ENCODE measurements at regions of chr18 and their contacts with region 1.

Region 1: GRCh38 chr18:35060122-35060815 is 19.1 kb downstream of the MAPRE2 start:
- DNase-seq: no peak
- ATAC-seq: no peak
- H3K4me3 ChIP-seq: no peak overlapping the region
- H3K4me3 Mint-ChIP-seq: no peak overlapping the region
- H3K27ac ChIP-seq: no peak overlapping the region
- H3K27ac Mint-ChIP-seq: no peak overlapping the region
- H3K4me1 ChIP-seq: peaks cover 0 to 19% of the 10 kb centered on the region in 2 experiments
- H3K4me1 Mint-ChIP-seq: peaks cover 74 to 84% (median 79%) of the 10 kb centered on the region in 3 donors
- H3K27me3 ChIP-seq: no peaks in the 10 kb centered on the region
- H3K27me3 Mint-ChIP-seq: no peaks in the 10 kb centered on the region

Region 2: GRCh38 chr18:34933880-34934708 is 126.2 kb before region 1 on chr18:
- CTCF ChIA-PET with region 1: no interaction called
- POLR2A ChIA-PET with region 1: no interaction called
- DNase-seq: no peak
- ATAC-seq: no peak
- H3K4me3 ChIP-seq: no peak overlapping the region
- H3K4me3 Mint-ChIP-seq: no peak overlapping the region
- H3K27ac ChIP-seq: no peak overlapping the region
- H3K27ac Mint-ChIP-seq: no peak overlapping the region
- H3K4me1 ChIP-seq: no peaks in the 10 kb centered on the region
- H3K4me1 Mint-ChIP-seq: no peaks in the 10 kb centered on the region
- H3K27me3 ChIP-seq: peaks cover 0 to 2% of the 10 kb centered on the region in 2 experiments
- H3K27me3 Mint-ChIP-seq: peaks cover 3 to 11% of the 10 kb centered on the region in 2 donors

Region 3: DNA sequence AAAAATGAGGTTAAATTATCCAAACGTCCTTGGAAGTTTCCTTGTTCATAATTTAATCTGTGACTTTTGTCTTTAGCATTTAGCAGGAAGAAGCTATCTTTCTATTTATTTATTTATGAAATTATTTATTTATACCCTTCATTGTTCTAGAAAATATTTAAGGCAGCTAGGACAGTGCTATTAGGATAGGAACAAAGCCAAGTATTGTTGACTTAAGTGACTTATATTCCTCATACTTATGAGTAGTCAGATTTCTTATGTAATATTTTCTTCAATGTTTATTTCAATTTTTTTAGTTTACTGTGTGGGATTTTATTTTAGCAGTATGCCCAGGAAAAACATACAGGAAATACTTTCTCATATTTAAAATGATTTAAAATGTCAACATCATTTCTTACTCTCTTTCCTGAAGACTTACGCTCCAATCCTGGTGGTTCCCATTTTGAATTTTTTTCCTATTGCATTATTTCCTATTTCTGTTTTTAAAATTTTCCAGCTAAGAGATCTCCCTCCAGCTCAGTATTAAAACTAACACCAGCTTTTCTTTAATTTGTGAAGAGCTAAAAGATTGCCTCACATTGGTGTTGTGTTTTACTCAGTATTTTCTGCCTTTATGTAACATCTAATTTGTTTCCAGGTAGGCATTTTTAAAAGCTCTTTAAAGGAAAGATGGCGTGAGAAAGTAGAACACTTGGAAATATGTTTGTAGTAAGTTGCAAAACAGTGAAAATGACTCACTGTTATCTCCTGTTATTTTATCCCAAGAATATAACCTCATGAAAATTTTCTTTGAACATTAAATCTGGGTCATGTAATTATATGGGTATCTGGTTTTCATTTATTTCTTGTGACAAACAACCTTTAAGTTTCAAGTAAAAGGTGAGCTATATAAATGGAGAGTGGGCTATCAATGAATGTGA is 13.2 kb after region 1 on chr18:
- CTCF ChIA-PET with region 1: interaction called in 1 of 2 experiments, 3 read pairs
- POLR2A ChIA-PET with region 1: interaction called in 1 of 2 experiments, 15 read pairs
- DNase-seq: no peak
- ATAC-seq: no peak
- H3K4me3 ChIP-seq: no peak overlapping the region
- H3K4me3 Mint-ChIP-seq: no peak overlapping the region
- H3K27ac ChIP-seq: no peak overlapping the region
- H3K27ac Mint-ChIP-seq: no peak overlapping the region
- H3K4me1 ChIP-seq: no peaks in the 10 kb centered on the region
- H3K4me1 Mint-ChIP-seq: peaks cover 63 to 65% (median 65%) of the 10 kb centered on the region in 3 donors
- H3K27me3 ChIP-seq: no peaks in the 10 kb centered on the region
- H3K27me3 Mint-ChIP-seq: no peaks in the 10 kb centered on the region

Region 4: DNA sequence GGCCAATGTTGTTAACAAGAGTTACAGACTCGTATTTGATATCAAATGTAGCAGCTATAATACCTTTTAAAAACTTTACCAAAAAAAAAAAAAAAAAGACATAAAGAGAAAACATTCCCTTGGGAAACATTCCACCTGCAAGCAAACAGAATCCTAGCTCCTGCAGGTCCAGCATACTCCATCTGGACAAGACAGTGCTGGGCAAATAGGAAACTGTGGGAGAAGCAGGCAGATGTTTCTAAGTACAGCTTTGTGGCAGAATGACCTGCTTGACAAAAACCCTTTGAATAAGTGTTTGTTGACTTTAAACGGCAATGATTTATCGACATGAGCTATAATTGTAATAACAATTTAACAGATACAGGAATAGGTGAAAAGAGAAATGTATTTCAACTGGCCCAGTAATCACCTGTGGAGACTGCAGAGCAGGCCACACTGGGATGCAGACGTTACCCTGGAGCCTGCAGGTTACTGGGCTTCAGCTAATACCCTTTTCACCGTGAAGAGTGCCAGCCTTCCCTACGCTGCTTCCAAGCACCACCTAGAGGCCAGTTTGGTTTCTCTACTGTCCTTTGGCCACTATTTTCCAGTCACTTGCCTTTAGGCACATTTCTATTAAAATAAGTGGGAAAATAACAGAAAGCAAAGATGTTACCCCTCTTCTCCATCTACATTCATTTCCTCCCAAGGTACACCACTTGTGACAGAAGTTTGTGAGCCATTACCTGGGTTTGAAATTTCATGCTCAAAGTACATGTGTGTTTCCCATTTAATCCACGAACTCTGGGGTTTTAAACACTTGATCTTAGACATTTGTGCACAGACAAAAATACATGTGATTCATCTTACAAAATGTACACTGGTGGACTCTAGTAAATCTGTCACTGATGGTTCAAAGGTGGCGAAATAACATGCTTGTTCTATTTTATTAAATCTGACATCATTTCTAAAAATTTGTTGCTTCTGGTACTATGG is 83.6 kb after region 1 on chr18:
- CTCF ChIA-PET with region 1: interaction called, 6 to 10 read pairs
- POLR2A ChIA-PET with region 1: no interaction called
- DNase-seq: peak in 25 of 35 experiments; percentile 6 to 61 (median 28)
- ATAC-seq: peak in 3 of 4 experiments; percentile 61 to 81 (median 78)
- H3K4me3 ChIP-seq: no peak overlapping the region
- H3K4me3 Mint-ChIP-seq: no peak overlapping the region
- H3K27ac ChIP-seq: no peak overlapping the region
- H3K27ac Mint-ChIP-seq: peak overlapping the region in 1 of 2 donors; percentile 40
- H3K4me1 ChIP-seq: no peaks in the 10 kb centered on the region
- H3K4me1 Mint-ChIP-seq: peaks cover 0 to 10% (median 3%) of the 10 kb centered on the region in 3 donors
- H3K27me3 ChIP-seq: no peaks in the 10 kb centered on the region
- H3K27me3 Mint-ChIP-seq: no peaks in the 10 kb centered on the region

Region 5: DNA sequence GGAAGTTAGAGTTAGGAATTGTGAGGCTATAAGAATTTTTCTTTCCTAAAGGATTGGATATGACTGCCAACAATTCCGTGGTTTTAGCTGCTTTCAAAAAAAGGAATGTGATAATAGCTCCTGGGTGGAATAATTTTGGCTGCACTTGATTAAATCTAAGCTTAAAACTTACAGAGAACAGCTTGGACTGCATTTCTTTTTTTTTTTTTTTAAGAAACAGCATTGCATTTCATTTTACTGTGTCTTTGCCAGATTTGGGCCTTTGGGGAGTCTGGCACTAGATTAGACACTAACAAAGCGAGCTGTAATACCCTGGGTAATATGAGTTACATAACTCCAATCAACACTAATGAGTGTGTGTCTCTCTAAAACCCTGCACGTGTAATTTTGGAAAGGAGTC is 142.8 kb after region 1 on chr18:
- CTCF ChIA-PET with region 1: no interaction called
- POLR2A ChIA-PET with region 1: no interaction called
- DNase-seq: no peak
- ATAC-seq: no peak
- H3K4me3 ChIP-seq: no peak overlapping the region
- H3K4me3 Mint-ChIP-seq: no peak overlapping the region
- H3K27ac ChIP-seq: no peak overlapping the region
- H3K27ac Mint-ChIP-seq: no peak overlapping the region
- H3K4me1 ChIP-seq: no peaks in the 10 kb centered on the region
- H3K4me1 Mint-ChIP-seq: no peaks in the 10 kb centered on the region
- H3K27me3 ChIP-seq: no peaks in the 10 kb centered on the region
- H3K27me3 Mint-ChIP-seq: peaks cover 5 to 10% of the 10 kb centered on the region in 2 donors

Region 6: GRCh38 chr18:35964319-35964718 is 904.0 kb after region 1 on chr18:
- CTCF ChIA-PET with region 1: no interaction called
- POLR2A ChIA-PET with region 1: no interaction called
- DNase-seq: no peak
- ATAC-seq: no peak
- H3K4me3 ChIP-seq: no peak overlapping the region
- H3K4me3 Mint-ChIP-seq: no peak overlapping the region
- H3K27ac ChIP-seq: no peak overlapping the region
- H3K27ac Mint-ChIP-seq: no peak overlapping the region
- H3K4me1 ChIP-seq: peaks cover 4 to 6% of the 10 kb centered on the region in 2 experiments
- H3K4me1 Mint-ChIP-seq: peaks cover 12 to 18% (median 15%) of the 10 kb centered on the region in 3 donors
- H3K27me3 ChIP-seq: peaks cover 0 to 4% of the 10 kb centered on the region in 2 experiments
- H3K27me3 Mint-ChIP-seq: peaks cover 0 to 1% of the 10 kb centered on the region in 2 donors